ENCODE measurements at regions of chr1 and their contacts with region 1.

Region 1: GRCh38 chr1:53220171-53220961 is at the start of gene CZIB:
- DNase-seq: peak; percentile 85 to 98 (median 90)

Region 2: GRCh38 chr1:53115403-53116306 is 104.7 kb before region 1 on chr1:
- intact Hi-C with region 1: no loop called
- DNase-seq: peak in 2 of 10 donors; percentile 43 to 76

Region 3: DNA sequence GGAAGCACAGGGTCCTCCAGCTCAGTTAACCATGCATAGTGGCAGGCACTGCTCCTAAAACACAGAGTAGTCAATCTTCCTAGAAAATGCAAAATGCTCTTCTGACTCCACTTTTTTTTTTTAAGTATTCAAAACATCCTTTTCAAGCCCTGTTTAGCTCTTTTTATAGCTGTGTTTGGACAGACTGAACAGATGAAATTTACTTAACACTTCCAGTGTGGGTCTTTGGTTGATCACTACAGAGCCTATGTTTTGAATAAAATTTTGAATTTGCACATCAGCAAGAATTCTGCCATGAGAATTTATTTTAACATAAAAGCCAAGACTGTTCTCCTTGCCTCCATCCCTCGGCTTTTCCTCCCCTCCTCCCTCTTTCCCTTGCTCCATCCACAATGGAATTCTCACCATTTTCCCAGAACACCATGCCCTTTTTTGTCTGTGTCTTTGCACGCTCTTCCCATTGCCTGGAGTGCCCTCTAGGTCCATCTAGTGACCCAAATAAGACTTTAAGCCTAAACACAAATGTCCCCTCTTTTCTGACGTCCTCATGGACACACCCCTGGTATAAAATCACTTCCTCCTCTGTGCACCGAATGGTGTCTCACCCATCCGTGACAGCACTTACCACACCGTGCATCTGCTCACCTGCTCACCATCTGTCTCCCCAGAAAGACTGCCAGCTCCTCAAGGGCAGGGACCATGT is 47.8 kb before region 1 on chr1:
- intact Hi-C with region 1: no loop called
- DNase-seq: no peak

Region 4: GRCh38 chr1:53196485-53197270 is 23.7 kb before region 1 on chr1 and contains the start of gene CPT2:
- intact Hi-C with region 1: loop called (anchors 1 kb)
- DNase-seq: peak; percentile 85 to 99 (median 94)

Region 5: DNA sequence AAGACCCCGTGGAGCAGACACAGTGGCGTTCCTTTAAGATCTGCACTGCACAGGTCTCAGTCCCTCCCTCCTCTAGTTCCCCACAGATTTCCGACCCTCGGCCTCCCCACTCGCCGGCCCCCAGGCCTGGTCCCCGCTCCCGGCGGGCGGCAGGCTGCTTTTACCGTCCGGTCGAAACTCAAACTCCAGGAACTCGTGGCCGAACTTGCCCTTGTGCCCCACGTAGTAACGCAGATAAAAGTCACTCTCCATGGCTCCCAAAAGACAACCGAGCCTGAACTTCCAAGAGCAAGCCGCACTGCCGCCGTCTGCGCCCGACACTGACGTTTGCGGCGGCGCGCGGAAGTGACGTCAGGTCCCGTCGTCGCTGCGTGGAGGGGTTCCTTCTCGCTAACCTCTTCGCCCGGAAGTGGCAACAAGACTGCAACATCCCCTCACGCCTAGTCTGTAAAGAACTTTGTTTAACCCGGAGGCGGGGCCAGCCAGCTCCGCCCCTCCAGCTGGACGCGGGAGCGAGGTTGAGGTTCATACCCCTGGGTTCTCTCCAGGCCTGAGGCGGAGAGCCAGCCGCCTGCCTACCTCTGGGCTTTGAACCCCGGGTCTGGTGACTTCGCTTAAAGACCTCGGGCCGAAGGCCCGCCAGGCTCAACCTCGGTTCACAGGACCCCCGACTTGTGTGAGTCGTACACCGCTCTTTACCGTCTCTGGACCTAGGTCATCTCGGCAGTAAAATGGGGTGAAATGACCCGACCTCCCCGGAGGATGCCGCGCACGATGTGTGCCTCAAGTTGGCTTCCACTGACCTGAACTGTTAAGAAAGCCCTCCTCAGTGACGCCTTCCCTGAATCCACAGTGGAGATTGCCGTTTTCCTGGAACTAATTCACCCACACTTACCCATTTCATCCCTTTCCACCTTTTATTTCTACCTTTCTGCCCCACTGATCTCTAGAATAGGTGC is 18.1 kb after region 1 on chr1 and contains the start of gene MAGOH:
- intact Hi-C with region 1: loop called (anchors 2 kb)
- DNase-seq: peak; percentile 93 to 99 (median 96)

Region 6: DNA sequence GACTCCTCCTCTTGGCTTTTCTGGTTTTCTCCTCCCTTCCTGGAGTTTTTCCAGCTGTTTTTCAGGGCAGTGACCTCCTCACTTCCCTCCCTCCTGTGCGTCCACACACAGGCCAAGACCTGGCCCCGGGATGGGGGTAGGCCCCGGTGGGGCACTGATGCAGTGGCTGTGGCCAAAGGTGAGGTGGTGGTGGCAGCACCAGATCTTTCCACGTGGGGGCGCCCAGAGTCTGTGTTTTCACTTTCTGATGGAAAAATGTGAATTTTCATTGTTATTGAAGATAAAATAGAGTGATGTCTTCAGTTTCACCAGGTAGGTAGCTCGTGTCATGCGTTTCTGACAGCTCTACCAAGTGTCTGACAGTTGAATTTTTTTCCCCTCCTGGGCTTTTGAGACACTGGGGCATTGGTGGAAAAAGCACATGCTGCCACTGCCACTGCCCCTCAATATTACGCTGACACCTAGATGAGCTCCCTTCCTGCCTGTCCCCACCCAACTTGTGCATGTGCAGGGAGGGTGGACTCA is 57.9 kb after region 1 on chr1:
- intact Hi-C with region 1: no loop called
- DNase-seq: peak; percentile 34 to 92 (median 70)